Sigmoid colon (tissue), 7 donors: ENCODE measurements at regions of chr9 and their contacts with region 1.

Region 1: DNA sequence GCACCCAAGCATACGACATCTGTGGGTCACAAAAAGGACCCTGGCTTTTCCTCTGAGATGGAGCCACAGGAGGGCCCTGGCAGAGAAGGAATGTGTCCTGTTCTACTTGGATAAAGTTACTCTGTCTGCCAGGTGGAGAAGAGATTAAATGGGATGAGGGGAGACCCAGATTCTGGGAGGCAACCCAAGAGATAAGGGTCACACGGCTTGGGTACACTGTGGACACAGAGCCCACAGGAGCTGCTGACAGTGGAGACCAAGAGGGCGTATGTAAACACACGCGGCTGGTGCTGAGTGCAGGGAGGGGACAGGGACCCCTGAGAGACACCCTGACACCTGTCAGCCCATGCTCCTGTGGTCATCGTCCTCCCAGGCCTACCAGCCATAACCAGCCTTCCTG is 6.2 kb downstream of the CDK20 start:
- DNase-seq: no peak
- H3K4me3 ChIP-seq: no peak overlapping the region
- H3K27ac ChIP-seq: no peak overlapping the region
- H3K4me1 ChIP-seq: peaks cover 0 to 6% (median 0%) of the 10 kb centered on the region in 4 donors
- H3K27me3 ChIP-seq: no peaks in the 10 kb centered on the region
- CTCF ChIP-seq: no peak
- EP300 ChIP-seq: no peak
- POLR2A ChIP-seq: no peak

Region 2: DNA sequence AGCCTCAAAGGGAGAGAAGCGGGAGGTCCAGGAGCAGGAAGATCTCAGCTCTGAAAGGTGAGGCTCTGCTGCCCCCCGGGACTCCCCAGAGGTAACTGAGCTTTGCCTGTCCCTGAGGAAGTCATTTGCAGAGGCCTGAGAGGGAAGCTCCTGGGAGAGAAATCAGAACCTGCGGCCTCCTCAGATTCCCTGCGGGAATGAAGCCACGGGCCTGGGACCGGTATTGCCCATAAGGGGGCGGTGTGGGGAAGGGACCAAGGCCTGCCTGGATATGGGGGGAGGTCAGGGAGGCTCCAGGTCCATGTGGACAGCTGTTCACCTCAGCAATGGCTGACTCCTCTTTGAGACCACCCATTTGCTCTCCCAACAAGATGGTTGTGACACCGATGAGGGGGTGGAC is 84.2 kb before region 1 on chr9:
- intact Hi-C with region 1: loop called (anchors 5 kb)
- DNase-seq: no peak
- H3K4me3 ChIP-seq: no peak overlapping the region
- H3K27ac ChIP-seq: no peak overlapping the region
- H3K4me1 ChIP-seq: peaks cover 0 to 7% (median 5%) of the 10 kb centered on the region in 4 donors
- H3K27me3 ChIP-seq: no peaks in the 10 kb centered on the region
- CTCF ChIP-seq: no peak
- EP300 ChIP-seq: no peak
- POLR2A ChIP-seq: no peak

Region 3: GRCh38 chr9:88041447-88041846 is 73.3 kb after region 1 on chr9:
- intact Hi-C with region 1: no loop called
- DNase-seq: no peak
- H3K4me3 ChIP-seq: no peak overlapping the region
- H3K27ac ChIP-seq: no peak overlapping the region
- H3K4me1 ChIP-seq: no peaks in the 10 kb centered on the region
- H3K27me3 ChIP-seq: no peaks in the 10 kb centered on the region
- CTCF ChIP-seq: peak in 3 of 4 experiments; percentile 15 to 49 (median 26)
- EP300 ChIP-seq: no peak
- POLR2A ChIP-seq: no peak